Right ventricle myocardium superior (tissue), 1 donor: ENCODE measurements at regions of chr5 and their contacts with region 1.

Region 1: GRCh38 chr5:153987306-153987705 is 51.4 kb downstream of the FAM114A2 start:
- DNase-seq: no peak
- ATAC-seq: no peak

Region 2: GRCh38 chr5:153756540-153756939 is 230.8 kb before region 1 on chr5:
- intact Hi-C with region 1: no loop called
- DNase-seq: no peak
- ATAC-seq: no peak

Region 3: DNA sequence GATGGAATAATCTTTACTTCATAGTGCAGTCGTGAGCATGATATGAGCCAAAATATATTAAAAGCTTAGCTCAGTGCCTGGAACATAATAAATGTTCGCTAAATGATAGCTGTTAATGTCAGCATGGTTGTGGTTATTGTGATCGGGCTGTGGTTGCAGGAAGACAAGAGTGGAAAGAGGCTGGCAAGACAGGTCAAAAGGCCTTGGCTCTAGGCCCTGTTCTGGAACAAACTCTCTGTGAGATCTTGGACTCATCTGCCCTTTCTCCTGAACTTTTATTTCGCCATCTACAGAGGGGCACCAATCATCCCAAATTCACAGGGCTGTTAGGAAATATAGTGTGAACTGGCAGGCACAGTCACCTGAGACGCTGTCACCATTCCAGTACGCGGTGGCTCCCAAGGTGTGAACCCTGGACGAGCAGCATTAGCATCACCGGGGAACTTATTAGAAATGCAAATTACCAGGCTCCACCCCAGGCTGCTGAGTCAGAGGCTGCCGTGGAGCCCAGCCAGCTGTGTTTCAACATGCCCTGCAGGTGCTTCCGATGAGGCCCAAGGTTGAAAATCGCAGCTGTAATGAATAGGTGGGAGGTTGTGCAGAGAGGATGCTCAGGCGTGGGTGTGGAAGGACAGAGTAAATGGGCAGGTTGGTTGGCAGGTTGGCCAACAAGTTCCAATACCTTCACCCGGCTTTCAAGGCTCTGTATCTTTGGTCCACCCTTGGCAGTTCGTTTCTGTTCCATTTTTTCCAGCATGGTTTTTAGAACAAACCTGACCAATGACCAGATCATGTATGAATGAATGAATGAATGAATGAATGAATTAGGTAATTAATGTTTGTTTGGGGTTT is 408.3 kb after region 1 on chr5:
- intact Hi-C with region 1: loop called (anchors 5 kb)
- DNase-seq: no peak
- ATAC-seq: no peak